ENCODE measurements at regions of chr10 and their contacts with region 1.

Region 1: DNA sequence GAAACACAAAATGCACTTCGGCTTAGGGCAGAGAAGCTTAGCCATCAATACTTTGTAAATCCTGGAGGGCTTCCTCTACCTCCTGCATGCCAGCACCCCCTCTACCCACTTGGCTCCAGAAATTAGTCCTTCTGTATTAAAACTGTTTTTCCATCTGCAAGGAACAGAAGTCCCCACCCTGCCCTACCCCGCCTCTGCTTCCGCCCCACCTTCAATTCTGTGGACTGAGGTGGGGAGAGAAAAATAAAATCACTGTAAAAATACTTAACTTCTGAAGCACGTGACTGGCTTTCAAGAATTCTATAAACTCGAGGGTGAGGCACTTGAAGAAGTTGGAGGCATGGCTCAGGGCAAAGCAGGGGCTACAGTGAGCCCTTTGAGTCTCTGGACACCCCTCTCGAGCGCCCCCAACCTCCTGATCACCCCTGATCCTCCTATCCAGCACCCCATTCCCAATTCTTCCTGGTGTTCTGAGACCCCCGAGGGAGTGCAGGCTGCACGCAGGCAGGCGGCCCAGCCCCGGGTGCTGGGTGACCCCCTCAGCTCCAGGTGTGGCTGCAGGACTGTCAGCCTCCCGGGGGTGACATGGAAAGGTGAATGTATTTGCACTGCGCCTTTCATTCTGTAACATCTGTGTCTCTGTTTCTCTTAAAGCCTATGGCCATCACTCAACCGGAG is 7.3 kb upstream of the KIAA1217 start:
- DNase-seq: no peak
- ATAC-seq: no peak
- H3K4me3 ChIP-seq: no peak overlapping the region
- H3K27ac ChIP-seq: no peak overlapping the region
- H3K4me1 ChIP-seq: no peaks in the 10 kb centered on the region
- H3K27me3 ChIP-seq: 0 out of 2 replicates have a peak, but pooled peaks cover 2% of the 10 kb centered on the region
- CTCF ChIP-seq: no peak
- POLR2A ChIP-seq: no peak
- RAD21 ChIP-seq: no peak

Region 2: GRCh38 chr10:23540401-23541030 is 661.1 kb before region 1 on chr10:
- CTCF ChIA-PET with region 1: no interaction called
- POLR2A ChIA-PET with region 1: no interaction called
- RAD21 ChIA-PET with region 1: no interaction called
- intact Hi-C with region 1: loop called (anchors 10 kb)
- DNase-seq: no peak
- ATAC-seq: no peak
- H3K4me3 ChIP-seq: no peak overlapping the region
- H3K27ac ChIP-seq: no peak overlapping the region
- H3K4me1 ChIP-seq: no peaks in the 10 kb centered on the region
- H3K27me3 ChIP-seq: peaks cover 31% of the 10 kb centered on the region
- CTCF ChIP-seq: no peak
- POLR2A ChIP-seq: no peak
- RAD21 ChIP-seq: no peak

Region 3: GRCh38 chr10:23614483-23614882 is 587.2 kb before region 1 on chr10:
- CTCF ChIA-PET with region 1: no interaction called
- POLR2A ChIA-PET with region 1: no interaction called
- RAD21 ChIA-PET with region 1: no interaction called
- intact Hi-C with region 1: no loop called
- DNase-seq: no peak
- ATAC-seq: no peak
- H3K4me3 ChIP-seq: no peak overlapping the region
- H3K27ac ChIP-seq: no peak overlapping the region
- H3K4me1 ChIP-seq: no peaks in the 10 kb centered on the region
- H3K27me3 ChIP-seq: 0 out of 2 replicates have a peak, but pooled peaks cover 3% of the 10 kb centered on the region
- CTCF ChIP-seq: no peak
- POLR2A ChIP-seq: no peak
- RAD21 ChIP-seq: no peak

Region 4: GRCh38 chr10:23850631-23851030 is 351.0 kb before region 1 on chr10:
- CTCF ChIA-PET with region 1: no interaction called
- POLR2A ChIA-PET with region 1: no interaction called
- RAD21 ChIA-PET with region 1: no interaction called
- intact Hi-C with region 1: no loop called
- DNase-seq: no peak
- ATAC-seq: no peak
- H3K4me3 ChIP-seq: no peak overlapping the region
- H3K27ac ChIP-seq: no peak overlapping the region
- H3K4me1 ChIP-seq: no peaks in the 10 kb centered on the region
- H3K27me3 ChIP-seq: no peaks in the 10 kb centered on the region
- CTCF ChIP-seq: no peak
- POLR2A ChIP-seq: no peak
- RAD21 ChIP-seq: no peak

Region 5: GRCh38 chr10:24406809-24407483 is 205.3 kb after region 1 on chr10:
- CTCF ChIA-PET with region 1: no interaction called
- POLR2A ChIA-PET with region 1: no interaction called
- RAD21 ChIA-PET with region 1: no interaction called
- intact Hi-C with region 1: no loop called
- DNase-seq: no peak
- ATAC-seq: no peak
- H3K4me3 ChIP-seq: no peak overlapping the region
- H3K27ac ChIP-seq: no peak overlapping the region
- H3K4me1 ChIP-seq: no peaks in the 10 kb centered on the region
- H3K27me3 ChIP-seq: peaks cover 32% of the 10 kb centered on the region
- CTCF ChIP-seq: no peak
- POLR2A ChIP-seq: no peak
- RAD21 ChIP-seq: no peak

Region 6: GRCh38 chr10:25696013-25696708 is 1494.5 kb after region 1 on chr10:
- CTCF ChIA-PET with region 1: no interaction called
- POLR2A ChIA-PET with region 1: no interaction called
- RAD21 ChIA-PET with region 1: no interaction called
- intact Hi-C with region 1: no loop called
- DNase-seq: no peak
- ATAC-seq: no peak
- H3K4me3 ChIP-seq: no peak overlapping the region
- H3K27ac ChIP-seq: no peak overlapping the region
- H3K4me1 ChIP-seq: no peaks in the 10 kb centered on the region
- H3K27me3 ChIP-seq: no peaks in the 10 kb centered on the region
- CTCF ChIP-seq: peak in 2 of 3 experiments; percentile 20 to 36; a peak in 3 of 6 replicates
- POLR2A ChIP-seq: no peak
- RAD21 ChIP-seq: no peak